Kidney (tissue), 22 donors: ENCODE measurements at regions of chr15 and their contacts with region 1.

Region 1: GRCh38 chr15:57527382-57528091 is 64.2 kb upstream of the MYZAP start:
- DNase-seq: peak in 4 of 5 donors; percentile 63 to 96 (median 84)
- H3K4me3 ChIP-seq: no peak overlapping the region
- H3K27ac ChIP-seq: peak overlapping the region; percentile 1 to 2
- H3K4me1 ChIP-seq: peaks cover 0 to 20% (median 14%) of the 10 kb centered on the region in 3 donors
- H3K27me3 ChIP-seq: no peaks in the 10 kb centered on the region
- CTCF ChIP-seq: peak; percentile 74

Region 2: DNA sequence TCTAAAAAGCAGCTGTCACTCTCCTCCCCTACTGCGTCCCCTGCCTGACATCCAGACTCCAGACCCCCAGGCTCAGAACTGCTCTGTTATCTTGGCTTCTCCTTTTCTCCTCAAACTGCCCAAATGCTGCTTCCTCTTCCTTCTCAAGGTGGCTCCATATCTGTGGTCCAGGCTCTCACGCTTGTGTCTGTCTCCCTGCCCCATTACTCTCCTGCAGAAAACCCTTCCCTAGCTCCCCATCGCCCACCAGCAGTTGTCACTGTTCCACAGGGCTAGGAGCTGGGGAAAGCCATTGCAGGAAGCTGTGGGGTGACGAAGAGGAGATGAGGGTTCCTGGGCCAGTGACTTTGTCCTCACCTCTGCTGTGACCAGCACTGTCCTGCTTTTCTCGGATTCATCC is 182.0 kb before region 1 on chr15:
- intact Hi-C with region 1: loop called (anchors 5 kb)
- DNase-seq: peak in 2 of 5 donors; percentile 45 to 71
- H3K4me3 ChIP-seq: no peak overlapping the region
- H3K27ac ChIP-seq: no peak overlapping the region
- H3K4me1 ChIP-seq: peaks cover 0 to 4% (median 0%) of the 10 kb centered on the region in 3 donors
- H3K27me3 ChIP-seq: no peaks in the 10 kb centered on the region
- CTCF ChIP-seq: peak; percentile 38

Region 3: GRCh38 chr15:57406062-57406772 is 121.3 kb before region 1 on chr15:
- intact Hi-C with region 1: no loop called
- DNase-seq: no peak
- H3K4me3 ChIP-seq: no peak overlapping the region
- H3K27ac ChIP-seq: peak overlapping the region in 1 of 2 donors; percentile 8
- H3K4me1 ChIP-seq: peaks cover 0 to 13% (median 5%) of the 10 kb centered on the region in 3 donors
- H3K27me3 ChIP-seq: no peaks in the 10 kb centered on the region
- CTCF ChIP-seq: no peak